ENCODE measurements at regions of chr19 and their contacts with region 1.

Region 1: DNA sequence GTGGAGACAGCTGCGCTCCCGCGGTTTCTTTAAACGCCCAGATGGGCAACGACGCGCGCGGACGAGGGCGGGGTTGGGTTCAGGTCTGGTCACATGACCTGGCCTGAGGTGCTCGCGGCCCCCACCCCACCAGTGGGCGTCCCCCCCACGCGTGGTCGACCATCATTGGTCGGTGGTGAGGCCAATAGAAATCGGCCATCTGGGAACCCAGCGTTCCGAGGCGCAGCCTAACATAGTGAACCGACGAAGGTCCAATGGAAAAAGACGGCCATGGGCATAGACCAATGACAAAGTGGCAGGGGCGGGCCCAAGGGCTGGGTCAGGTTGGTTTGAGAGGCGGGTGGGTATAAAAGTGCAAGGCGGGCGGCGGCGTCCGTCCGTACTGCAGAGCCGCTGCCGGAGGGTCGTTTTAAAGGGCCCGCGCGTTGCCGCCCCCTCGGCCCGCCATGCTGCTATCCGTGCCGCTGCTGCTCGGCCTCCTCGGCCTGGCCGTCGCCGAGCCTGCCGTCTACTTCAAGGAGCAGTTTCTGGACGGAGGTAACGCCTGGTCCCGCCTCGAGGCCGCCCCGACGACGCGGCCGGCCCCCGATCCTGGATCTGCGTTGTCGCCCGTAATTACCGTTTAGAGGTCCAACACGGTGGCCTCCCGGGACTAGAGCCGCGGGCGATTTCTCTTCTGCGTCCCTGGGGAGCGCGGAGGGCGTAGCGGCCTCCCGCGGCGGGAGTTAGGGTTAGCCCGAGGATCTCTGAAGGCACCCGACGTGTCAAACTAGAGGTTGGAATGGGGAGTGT is at the start of gene CALR:
- DNase-seq: peak; percentile 100
- ATAC-seq: peak; percentile 86
- H3K4me3 ChIP-seq: peak within 1 kb of the TSS; percentile 77 to 95 (median 93)
- H3K4me3 Mint-ChIP-seq: peak within 1 kb of the TSS; percentile 98
- H3K27ac ChIP-seq: peak within 1 kb of the TSS; percentile 79 to 97
- H3K27ac Mint-ChIP-seq: peak within 1 kb of the TSS; percentile 96
- H3K4me1 ChIP-seq: peaks cover 38 to 61% of the 10 kb centered on the region in 2 donors
- H3K4me1 Mint-ChIP-seq: peaks cover 57% of the 10 kb centered on the region
- H3K27me3 ChIP-seq: no peaks in the 10 kb centered on the region
- H3K27me3 Mint-ChIP-seq: no peaks in the 10 kb centered on the region
- CTCF ChIP-seq: peak; percentile 20
- total RNA-seq, gene CALR: 214 and 237 TPM in 2 replicates

Region 2: DNA sequence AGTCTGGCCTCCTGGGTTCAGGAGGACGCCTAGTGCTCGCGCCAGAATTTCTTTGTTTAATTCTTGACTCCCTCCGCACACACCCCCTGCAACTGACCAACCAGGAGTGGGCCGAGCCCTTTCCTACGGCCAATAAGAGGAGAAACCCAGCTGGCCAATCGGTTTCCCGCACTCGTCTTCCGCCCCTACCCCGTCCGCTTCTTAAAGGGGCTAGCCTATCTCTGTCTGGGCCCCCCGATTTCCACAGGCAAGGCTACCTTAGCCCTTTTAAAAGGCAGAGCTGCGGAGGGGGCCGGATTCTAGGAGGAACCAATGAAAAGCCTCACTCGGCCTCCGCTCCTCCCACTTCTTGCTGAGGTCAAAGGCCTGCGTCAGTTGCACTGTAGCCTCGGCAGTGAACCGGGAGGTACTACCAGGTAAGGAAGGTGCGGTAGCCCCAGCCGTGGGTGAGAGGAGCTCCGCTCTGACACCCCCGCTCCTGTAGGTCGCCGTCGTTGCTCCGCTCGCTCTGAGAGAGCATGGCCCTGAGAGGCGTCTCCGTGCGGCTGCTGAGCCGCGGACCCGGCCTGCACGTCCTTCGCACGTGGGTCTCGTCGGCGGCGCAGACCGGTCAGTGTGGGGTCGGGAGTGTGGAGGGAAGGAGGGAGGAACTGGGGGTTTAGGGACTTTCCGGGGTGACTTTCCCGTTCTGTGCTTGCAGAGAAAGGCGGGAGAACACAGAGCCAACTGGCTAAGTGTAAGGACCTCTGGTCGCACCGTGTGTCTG is 47.5 kb before region 1 on chr19 and contains the start of gene GCDH:
- CTCF ChIA-PET with region 1: no interaction called
- POLR2A ChIA-PET with region 1: interaction called, 9 read pairs
- intact Hi-C with region 1: loop called (anchors 1 kb)
- DNase-seq: peak; percentile 98
- ATAC-seq: peak; percentile 91
- H3K4me3 ChIP-seq: peak within 1 kb of the TSS; percentile 51 to 92 (median 78)
- H3K4me3 Mint-ChIP-seq: peak within 1 kb of the TSS; percentile 99
- H3K27ac ChIP-seq: peak within 1 kb of the TSS; percentile 80 to 83
- H3K27ac Mint-ChIP-seq: peak within 1 kb of the TSS; percentile 95
- H3K4me1 ChIP-seq: peaks cover 15 to 20% of the 10 kb centered on the region in 2 donors
- H3K4me1 Mint-ChIP-seq: peaks cover 31% of the 10 kb centered on the region
- H3K27me3 ChIP-seq: no peaks in the 10 kb centered on the region
- H3K27me3 Mint-ChIP-seq: no peaks in the 10 kb centered on the region
- CTCF ChIP-seq: no peak
- total RNA-seq, gene GCDH: 61.2 and 63.2 TPM in 2 replicates

Region 3: DNA sequence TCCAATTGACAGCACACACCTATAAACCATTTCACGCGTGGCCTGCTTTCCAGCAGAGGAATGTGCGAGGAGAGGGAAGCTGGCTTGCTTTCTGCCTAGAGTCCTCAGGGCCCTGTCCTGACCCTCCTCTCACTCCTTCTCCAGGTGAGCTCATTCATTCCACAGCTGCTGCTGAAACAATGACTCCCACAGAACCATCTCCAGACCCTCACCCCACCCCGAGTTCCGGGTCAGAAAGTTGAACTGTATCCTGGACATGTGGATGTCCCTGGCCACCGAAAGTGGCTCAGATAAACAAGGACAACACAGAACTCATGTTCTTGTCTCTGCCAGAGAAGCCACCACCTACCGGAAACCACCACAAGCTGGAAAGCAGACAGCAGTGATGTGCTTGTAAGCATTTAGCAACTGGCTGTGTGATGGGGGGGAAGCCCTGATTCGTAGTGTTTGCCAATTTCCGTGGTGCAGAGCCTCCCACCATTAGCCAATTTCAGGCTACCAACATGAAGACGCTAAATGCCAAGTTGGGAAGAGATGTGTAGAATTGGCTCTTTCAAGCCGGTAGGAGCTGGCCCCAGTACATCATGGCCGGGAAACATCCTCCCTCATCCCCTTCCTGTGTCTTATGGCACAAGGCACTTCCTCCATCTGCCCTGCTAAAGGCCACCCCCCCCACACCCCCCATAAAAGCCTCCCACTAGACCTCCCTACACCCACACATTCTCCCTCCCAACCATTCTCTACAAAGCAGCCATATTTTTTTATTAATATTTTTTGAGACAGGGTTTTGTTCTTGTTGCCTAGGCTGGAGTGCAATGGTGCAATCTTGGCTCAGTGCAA is 24.4 kb before region 1 on chr19:
- CTCF ChIA-PET with region 1: no interaction called
- POLR2A ChIA-PET with region 1: interaction called, 8 read pairs
- intact Hi-C with region 1: loop called (anchors 1 kb)
- DNase-seq: peak; percentile 50
- ATAC-seq: peak; percentile 52
- H3K4me3 ChIP-seq: no peak overlapping the region
- H3K4me3 Mint-ChIP-seq: peak overlapping the region; percentile 48
- H3K27ac ChIP-seq: no peak overlapping the region
- H3K27ac Mint-ChIP-seq: peak overlapping the region; percentile 67
- H3K4me1 ChIP-seq: peaks cover 9 to 25% of the 10 kb centered on the region in 2 donors
- H3K4me1 Mint-ChIP-seq: peaks cover 17% of the 10 kb centered on the region
- H3K27me3 ChIP-seq: no peaks in the 10 kb centered on the region
- H3K27me3 Mint-ChIP-seq: no peaks in the 10 kb centered on the region
- CTCF ChIP-seq: no peak

Region 4: DNA sequence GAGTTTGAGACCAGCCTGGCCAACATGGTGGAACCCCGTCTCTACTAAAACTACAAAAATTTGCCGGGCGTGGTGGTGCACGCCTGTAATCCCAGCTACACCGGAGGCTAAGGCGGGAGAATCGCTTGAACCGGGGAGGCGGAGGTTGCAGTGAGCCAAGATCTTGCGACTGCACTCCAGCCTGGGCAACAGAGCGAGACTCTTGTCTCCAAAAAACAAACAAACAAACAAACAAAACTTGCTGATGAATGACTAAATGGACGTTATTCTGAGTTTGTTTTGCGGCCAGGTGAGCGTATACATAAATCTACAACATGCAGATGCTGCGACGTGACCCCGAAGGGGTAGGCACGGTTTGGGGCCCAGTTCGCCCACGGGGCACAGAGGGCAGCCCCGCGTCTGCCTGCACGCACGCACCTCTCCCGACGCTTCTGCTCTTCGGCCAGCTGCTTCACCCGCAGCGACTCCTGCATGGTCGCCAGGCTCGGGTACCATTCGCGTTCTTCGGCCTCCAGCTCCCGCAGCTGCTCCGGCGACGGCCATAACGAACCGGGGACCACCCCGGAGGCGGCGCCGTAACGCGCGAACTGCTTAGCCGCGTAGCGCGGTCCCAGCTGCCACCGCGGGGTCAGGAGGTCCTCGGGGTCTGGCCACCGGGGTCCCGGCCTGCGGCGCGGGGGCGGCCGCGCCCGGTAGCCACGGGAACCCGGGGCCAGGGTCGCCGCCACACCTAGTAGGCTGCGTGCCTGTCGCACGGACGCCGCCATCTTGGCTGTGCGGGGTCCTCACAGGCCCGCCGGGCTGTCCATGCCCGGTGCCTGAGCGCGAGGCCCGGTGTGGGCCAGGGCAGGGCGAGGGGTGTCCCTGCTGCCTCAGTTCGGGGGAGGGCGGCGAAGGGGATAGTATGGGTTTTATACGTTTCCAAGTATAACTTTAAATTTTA is 18.3 kb after region 1 on chr19 and contains the start of gene GADD45GIP1:
- CTCF ChIA-PET with region 1: no interaction called
- POLR2A ChIA-PET with region 1: no interaction called
- intact Hi-C with region 1: loop called (anchors 2 kb)
- DNase-seq: peak; percentile 86
- ATAC-seq: peak; percentile 98
- H3K4me3 ChIP-seq: peak within 1 kb of the TSS; percentile 60 to 83 (median 65)
- H3K4me3 Mint-ChIP-seq: peak within 1 kb of the TSS; percentile 91
- H3K27ac ChIP-seq: peak within 1 kb of the TSS; percentile 75 to 90
- H3K27ac Mint-ChIP-seq: peak within 1 kb of the TSS; percentile 95
- H3K4me1 ChIP-seq: peaks cover 21 to 36% of the 10 kb centered on the region in 2 donors
- H3K4me1 Mint-ChIP-seq: peaks cover 30% of the 10 kb centered on the region
- H3K27me3 ChIP-seq: no peaks in the 10 kb centered on the region
- H3K27me3 Mint-ChIP-seq: peaks cover 2% of the 10 kb centered on the region
- CTCF ChIP-seq: no peak
- total RNA-seq, gene GADD45GIP1: 11.7 and 12.6 TPM in 2 replicates

Region 5: DNA sequence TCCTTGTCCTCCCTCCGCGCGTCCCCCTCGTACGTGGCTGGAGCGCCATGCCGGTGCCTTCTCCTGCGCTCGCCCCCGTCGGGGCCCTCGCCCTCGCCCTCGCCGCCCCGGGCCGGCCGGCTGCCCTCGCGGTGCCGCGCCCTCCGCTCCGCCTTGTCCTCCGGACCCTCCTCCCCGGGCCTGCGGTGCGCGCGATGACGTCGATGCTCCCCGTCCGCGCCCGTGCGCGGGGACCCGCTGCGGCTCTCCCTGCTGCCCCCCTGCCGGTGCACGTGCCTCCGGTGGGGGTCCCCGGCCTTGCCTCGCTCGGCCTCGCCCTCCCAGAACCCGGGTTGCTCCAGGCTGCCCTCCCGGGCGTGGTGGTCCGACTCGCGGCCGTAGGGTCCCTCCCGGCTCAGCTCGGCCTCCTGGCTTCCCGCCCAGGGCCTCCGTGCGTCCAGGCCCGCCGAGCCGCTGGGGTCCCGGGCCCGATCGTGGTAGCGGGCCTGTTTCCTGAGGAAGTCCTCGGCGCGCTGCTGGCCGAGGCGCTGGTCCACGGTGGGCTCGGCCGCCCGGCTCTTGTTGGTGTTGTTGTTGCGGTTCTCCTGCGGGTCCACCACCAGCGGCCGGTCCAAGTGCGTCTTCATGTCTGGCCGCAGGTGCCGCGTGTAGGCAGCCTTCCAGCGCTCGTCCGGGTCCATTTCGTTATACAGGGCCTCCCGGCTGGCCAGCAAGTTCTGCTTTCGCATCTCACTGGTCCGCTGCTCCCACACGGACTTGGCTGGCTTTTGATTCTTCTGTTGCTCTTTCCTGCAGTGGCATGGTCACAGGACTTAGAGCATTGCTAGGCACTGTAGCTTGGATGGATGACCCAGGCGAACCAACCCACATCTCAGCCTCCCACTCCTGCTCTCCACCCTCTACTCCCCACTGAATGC is 360.4 kb after region 1 on chr19:
- CTCF ChIA-PET with region 1: no interaction called
- POLR2A ChIA-PET with region 1: no interaction called
- intact Hi-C with region 1: no loop called
- DNase-seq: no peak
- ATAC-seq: no peak
- H3K4me3 ChIP-seq: no peak overlapping the region
- H3K4me3 Mint-ChIP-seq: peak overlapping the region; percentile 15
- H3K27ac ChIP-seq: no peak overlapping the region
- H3K27ac Mint-ChIP-seq: no peak overlapping the region
- H3K4me1 ChIP-seq: no peaks in the 10 kb centered on the region
- H3K4me1 Mint-ChIP-seq: no peaks in the 10 kb centered on the region
- H3K27me3 ChIP-seq: peaks cover 0 to 14% (median 7%) of the 10 kb centered on the region in 4 experiments
- H3K27me3 Mint-ChIP-seq: peaks cover 52% of the 10 kb centered on the region
- CTCF ChIP-seq: no peak

Region 6: GRCh38 chr19:13463296-13463695 is 524.9 kb after region 1 on chr19:
- CTCF ChIA-PET with region 1: no interaction called
- POLR2A ChIA-PET with region 1: no interaction called
- intact Hi-C with region 1: no loop called
- DNase-seq: no peak
- ATAC-seq: no peak
- H3K4me3 ChIP-seq: no peak overlapping the region
- H3K4me3 Mint-ChIP-seq: no peak overlapping the region
- H3K27ac ChIP-seq: no peak overlapping the region
- H3K27ac Mint-ChIP-seq: no peak overlapping the region
- H3K4me1 ChIP-seq: no peaks in the 10 kb centered on the region
- H3K4me1 Mint-ChIP-seq: no peaks in the 10 kb centered on the region
- H3K27me3 ChIP-seq: no peaks in the 10 kb centered on the region
- H3K27me3 Mint-ChIP-seq: peaks cover 25% of the 10 kb centered on the region
- CTCF ChIP-seq: no peak